ENCODE measurements at regions of chr3 and their contacts with region 1.

Region 1: DNA sequence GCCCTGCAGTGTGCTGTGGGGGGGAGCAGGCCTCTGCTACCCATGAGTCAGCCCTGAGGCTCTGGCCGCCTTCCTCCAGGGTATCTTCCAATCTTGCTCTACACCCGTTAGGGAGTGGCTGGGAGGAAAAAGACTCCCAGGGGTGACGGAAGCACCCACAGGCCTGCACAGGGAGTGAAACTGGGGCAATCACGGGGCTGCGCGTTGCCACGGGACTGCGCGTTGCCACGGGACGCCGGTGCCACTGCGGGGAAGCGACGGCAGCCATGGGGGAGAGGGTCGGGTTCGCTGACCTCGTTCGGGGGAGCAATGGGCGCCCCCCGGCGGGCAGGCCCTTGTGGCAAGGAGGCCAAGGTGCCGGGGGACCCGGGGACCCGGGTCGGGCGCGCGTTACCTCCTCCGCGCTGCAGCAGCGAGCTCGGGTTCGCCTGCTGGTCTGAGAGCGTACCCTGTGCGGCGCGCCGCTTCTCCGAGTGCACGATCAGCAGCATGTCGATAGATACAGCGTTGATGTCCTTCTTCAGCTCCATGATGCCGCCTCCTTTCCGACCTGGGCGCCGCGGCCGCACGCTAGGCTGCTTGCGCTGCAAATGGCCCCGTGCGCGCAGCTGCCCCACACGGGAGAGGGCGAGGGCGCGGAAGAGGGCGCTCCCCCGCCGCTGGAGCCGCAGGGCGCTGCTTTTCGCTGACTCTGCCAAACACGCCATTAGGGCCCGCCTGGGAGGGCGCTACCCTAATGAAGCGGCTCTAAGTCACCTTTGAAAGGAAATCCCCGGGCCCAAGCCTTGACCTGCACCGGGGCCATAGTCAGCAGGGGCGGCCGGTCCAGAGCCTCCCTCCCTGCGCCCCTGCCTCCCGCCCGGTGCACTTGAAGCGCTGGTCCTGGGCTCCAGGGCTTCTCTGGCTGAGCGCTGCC is at the start of gene KY:
- DNase-seq: peak; percentile 40 to 58
- ATAC-seq: peak; percentile 68 to 71
- H3K4me3 ChIP-seq: peak within 1 kb of the TSS; percentile 54 to 71 (median 62)
- H3K27ac ChIP-seq: peak within 1 kb of the TSS; percentile 74 to 87 (median 82)
- H3K4me1 ChIP-seq: peaks cover 50 to 54% of the 10 kb centered on the region in 2 donors
- H3K27me3 ChIP-seq: no peaks in the 10 kb centered on the region
- CTCF ChIP-seq: peak in 2 of 5 experiments; percentile 41 to 46
- POLR2A ChIP-seq: no peak
- total RNA-seq, gene KY: 0.68 to 3.3 (median 1.8) TPM

Region 2: DNA sequence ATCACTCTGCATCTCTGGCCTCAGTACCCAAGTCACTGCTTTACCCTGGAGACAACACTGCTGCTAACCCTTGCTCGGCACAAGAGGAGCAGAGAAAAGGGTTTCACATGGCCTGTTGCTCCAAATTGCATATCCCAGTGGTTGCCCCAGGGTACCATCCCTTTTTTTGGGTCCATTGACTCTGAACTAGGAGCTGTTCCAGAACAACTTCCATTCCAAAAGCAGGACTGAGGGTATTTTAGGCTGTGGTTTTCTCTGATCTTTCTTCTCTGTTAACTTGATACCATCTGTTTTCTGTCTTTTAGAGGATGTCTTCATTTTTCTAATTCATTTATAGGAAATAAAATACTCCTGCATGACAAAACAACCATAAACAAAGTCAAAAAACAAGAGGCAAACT is 382.7 kb before region 1 on chr3:
- in situ Hi-C with region 1: no loop called
- intact Hi-C with region 1: no loop called
- DNase-seq: no peak
- ATAC-seq: no peak
- H3K4me3 ChIP-seq: no peak overlapping the region
- H3K27ac ChIP-seq: no peak overlapping the region
- H3K4me1 ChIP-seq: no peaks in the 10 kb centered on the region
- H3K27me3 ChIP-seq: no peaks in the 10 kb centered on the region
- CTCF ChIP-seq: no peak
- POLR2A ChIP-seq: no peak

Region 3: GRCh38 chr3:134677196-134677986 is 26.7 kb after region 1 on chr3:
- in situ Hi-C with region 1: no loop called
- intact Hi-C with region 1: loop called (anchors 2 kb)
- DNase-seq: peak in 1 of 2 donors; percentile 26
- ATAC-seq: peak; percentile 51 to 52
- H3K4me3 ChIP-seq: no peak overlapping the region
- H3K27ac ChIP-seq: no peak overlapping the region
- H3K4me1 ChIP-seq: peaks cover 17 to 24% of the 10 kb centered on the region in 2 donors
- H3K27me3 ChIP-seq: no peaks in the 10 kb centered on the region
- CTCF ChIP-seq: peak in 4 of 5 experiments; percentile 41 to 69 (median 62)
- POLR2A ChIP-seq: no peak

Region 4: GRCh38 chr3:134721219-134721618 is 70.5 kb after region 1 on chr3:
- in situ Hi-C with region 1: no loop called
- intact Hi-C with region 1: loop called (anchors 1 kb)
- DNase-seq: no peak
- ATAC-seq: no peak
- H3K4me3 ChIP-seq: no peak overlapping the region
- H3K27ac ChIP-seq: no peak overlapping the region
- H3K4me1 ChIP-seq: peaks cover 25 to 33% of the 10 kb centered on the region in 2 donors
- H3K27me3 ChIP-seq: no peaks in the 10 kb centered on the region
- CTCF ChIP-seq: no peak
- POLR2A ChIP-seq: no peak

Region 5: DNA sequence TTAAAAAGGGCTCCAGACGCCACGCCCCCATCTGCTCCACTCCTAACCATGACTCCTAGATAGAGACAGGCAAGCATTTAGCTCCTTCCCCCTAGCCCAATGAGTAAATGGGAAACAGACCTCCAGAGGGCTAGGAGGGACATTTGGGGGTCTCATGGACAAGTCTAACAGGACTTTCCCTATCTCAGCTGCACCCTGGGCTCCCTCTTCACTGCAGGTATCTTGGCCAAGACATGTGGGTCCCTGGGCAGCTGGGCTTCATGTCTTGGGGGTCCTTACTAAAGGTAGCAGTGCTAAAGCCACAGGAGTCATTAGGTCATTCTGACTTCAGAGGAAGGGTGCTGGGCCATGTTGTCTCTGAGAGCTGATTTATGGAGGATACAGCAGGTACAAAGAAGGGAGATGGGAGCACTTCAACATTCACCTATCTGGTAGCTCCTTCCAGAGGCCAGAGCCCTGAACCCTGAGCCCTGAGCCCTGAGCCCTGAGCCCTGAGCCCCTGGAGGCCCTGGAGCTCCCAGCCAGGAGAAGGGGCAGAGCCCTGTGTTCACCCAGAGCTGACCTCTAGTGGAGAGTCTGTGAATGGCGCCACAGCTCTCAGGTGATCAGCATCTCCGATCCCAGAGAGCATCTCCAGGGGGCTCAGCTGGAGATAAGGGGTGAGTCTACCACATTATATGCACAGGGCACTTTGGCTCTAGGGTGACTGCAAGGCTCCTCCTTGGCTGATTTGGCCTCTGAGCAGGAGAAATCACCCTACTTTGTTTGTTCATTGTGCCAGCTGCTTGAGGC is 104.3 kb after region 1 on chr3:
- in situ Hi-C with region 1: no loop called
- intact Hi-C with region 1: loop called (anchors 1 kb)
- DNase-seq: peak in 1 of 2 donors; percentile 45
- ATAC-seq: peak; percentile 55 to 75
- H3K4me3 ChIP-seq: no peak overlapping the region
- H3K27ac ChIP-seq: no peak overlapping the region
- H3K4me1 ChIP-seq: peaks cover 12 to 18% of the 10 kb centered on the region in 2 donors
- H3K27me3 ChIP-seq: no peaks in the 10 kb centered on the region
- CTCF ChIP-seq: peak; percentile 61 to 74 (median 71)
- POLR2A ChIP-seq: no peak

Region 6: DNA sequence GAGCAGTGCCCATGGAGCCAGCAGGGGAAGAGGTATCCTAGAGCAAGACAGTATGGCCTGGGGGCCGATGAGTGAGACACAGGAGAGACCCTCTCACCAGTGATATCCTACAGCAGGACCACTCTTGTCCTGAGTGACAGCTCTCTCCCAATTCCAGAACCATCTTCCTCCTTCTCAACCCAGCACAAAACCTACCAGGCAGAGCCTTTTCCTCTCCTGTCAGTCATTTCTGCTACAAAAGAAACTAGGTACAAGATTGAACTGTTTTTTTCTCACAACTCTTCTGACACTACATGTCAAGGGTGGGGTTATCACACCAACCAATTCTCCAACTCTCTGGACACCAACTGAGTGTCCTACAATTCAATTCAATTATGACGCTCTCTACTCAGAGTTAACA is 651.0 kb after region 1 on chr3:
- in situ Hi-C with region 1: no loop called
- intact Hi-C with region 1: no loop called
- DNase-seq: no peak
- ATAC-seq: no peak
- H3K4me3 ChIP-seq: no peak overlapping the region
- H3K27ac ChIP-seq: no peak overlapping the region
- H3K4me1 ChIP-seq: no peaks in the 10 kb centered on the region
- H3K27me3 ChIP-seq: no peaks in the 10 kb centered on the region
- CTCF ChIP-seq: no peak
- POLR2A ChIP-seq: no peak

Measured in gastrocnemius medialis (tissue), 4 donors.